ENCODE measurements at regions of chr2 and their contacts with region 1.

Region 1: GRCh38 chr2:219229305-219230058 is at the starts of genes ANKZF1 and ATG9A:
- DNase-seq: peak; percentile 98

Region 2: DNA sequence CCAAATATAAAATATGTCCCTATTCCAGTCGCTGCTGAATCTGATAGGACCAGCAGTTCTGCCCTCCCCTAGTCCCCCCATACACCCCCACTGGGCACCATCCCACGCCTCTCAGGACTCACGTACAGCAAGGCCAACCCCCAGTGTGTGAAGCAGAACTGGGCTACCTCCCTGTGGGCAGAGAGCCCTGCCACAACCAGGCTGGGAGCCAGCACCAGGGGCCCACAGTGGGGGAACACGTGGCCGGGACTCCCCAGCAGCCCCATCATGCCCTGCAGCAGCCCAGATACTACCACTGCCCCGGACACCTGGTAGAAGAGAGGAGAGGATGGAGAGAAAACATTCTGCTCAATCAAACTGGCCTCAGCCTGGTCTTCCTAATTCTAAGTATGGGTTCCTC is 61.0 kb before region 1 on chr2:
- CTCF ChIA-PET with region 1: no interaction called
- POLR2A ChIA-PET with region 1: no interaction called
- DNase-seq: no peak

Region 3: DNA sequence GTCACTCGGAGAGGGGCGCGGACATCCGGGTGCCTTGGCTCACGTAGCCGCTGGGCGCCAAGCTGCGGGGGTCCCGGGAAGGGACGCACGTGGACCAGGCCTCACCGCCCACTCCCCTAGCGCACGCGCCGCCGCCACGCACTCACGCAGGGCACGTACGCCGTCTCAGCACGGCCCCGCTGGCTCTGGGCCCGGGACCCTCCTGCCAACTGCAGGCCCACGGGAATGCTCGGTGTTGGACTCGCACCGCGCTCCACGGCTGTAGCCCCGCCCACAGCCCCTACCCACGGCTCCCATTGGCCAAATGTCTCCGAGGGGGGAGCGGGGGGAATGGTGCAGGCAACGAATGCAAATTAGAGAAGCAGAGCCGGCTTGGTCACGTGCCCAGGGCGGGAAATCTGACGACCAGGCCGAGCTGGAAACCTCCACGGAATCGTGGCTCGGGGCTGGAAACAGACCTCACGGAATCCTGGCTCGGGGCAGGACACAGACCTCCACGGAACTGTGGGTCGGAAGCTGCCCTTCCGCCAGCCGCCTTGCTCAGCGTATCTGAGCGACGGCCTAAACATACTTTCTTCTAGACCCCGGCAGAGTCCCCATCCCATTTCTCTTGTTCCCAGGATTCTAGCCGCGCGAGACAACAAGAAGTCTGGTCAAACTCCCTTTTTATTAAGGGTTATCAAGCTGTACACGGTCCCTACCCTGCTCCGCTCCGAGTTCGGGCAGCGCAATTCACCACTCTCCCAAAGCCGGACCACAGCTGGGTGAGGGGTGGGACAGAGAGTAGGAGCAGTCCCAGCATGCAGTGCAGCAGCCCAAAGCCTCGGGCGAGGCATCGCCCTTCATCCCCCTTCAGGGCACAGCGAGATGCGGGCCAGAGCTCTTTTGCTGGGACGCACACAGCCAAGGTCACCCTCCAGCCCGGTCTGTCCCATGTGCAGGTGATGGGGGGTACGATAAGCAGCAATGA is 10.5 kb before region 1 on chr2 and contains the start of gene ABCB6:
- CTCF ChIA-PET with region 1: no interaction called
- POLR2A ChIA-PET with region 1: interaction called, 10 read pairs
- DNase-seq: peak; percentile 65

Region 4: GRCh38 chr2:219266886-219267285 is 37.4 kb after region 1 on chr2:
- CTCF ChIA-PET with region 1: no interaction called
- POLR2A ChIA-PET with region 1: no interaction called
- DNase-seq: no peak